Activated T-helper 1 cell treated with anti-CD3 and anti-CD28 coated beads, Interleukin-12 subunit alpha, Interleukin-12 subunit beta, Interleukin-2, Interleukin-4 antibody, amounts not matched to agents 30 ng/mL and 10 ng/mL and 1 ng/mL, durations not matched to agents 14 hours and 24 hours and 36 hours (primary cell): ENCODE measurements at regions of chr1 and their contacts with region 1.

Region 1: GRCh38 chr1:211939876-211940468 is 95.4 kb downstream of the INTS7 start:
- DNase-seq: peak; percentile 33
- H3K4me3 Mint-ChIP-seq: no peak overlapping the region
- H3K27ac Mint-ChIP-seq: peak overlapping the region; percentile 2
- H3K4me1 Mint-ChIP-seq: peaks cover 47% of the 10 kb centered on the region
- H3K27me3 Mint-ChIP-seq: no peaks in the 10 kb centered on the region

Region 2: DNA sequence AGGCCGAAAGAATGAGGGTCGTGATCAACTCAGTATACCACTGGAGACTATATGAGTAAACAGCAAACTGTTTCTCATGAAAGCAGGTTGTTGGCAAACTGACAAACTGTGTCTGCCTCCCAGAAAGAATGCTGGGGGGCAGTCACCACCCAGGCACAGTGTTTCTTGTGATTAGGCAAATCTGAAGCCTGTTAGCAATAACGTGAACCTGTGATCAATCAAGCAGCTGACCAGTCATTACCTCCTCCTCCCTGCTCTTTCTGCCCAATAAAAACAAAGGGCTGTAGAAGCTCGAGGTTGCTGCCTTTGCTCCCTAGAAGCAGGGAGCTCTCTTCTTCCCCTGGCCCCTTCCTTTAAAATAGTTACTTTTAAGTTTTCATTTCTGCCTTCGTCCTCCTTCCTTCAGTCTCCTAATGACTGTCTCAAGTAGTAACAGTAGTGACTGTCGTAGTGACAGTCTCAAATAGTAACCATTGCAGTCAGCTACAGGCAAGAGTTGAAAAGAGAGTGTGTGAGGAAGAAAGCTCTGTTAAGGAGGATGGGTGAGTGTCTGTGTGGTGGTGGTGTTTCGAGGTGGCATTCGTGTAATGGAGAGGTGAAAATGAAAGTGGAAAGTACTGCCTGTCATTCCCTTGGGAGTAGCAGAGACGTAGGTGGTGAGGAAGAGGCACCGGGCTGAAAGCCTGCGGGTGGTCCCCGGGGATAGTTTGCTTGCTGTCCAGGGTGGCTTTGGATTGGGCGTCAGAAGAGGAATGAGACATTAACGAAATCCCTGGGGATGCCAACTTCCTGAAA is 1596.8 kb before region 1 on chr1:
- intact Hi-C with region 1: loop called (anchors 5 kb)
- DNase-seq: no peak
- H3K4me3 Mint-ChIP-seq: no peak overlapping the region
- H3K27ac Mint-ChIP-seq: no peak overlapping the region
- H3K4me1 Mint-ChIP-seq: peaks cover 29% of the 10 kb centered on the region
- H3K27me3 Mint-ChIP-seq: peaks cover 9% of the 10 kb centered on the region

Region 3: DNA sequence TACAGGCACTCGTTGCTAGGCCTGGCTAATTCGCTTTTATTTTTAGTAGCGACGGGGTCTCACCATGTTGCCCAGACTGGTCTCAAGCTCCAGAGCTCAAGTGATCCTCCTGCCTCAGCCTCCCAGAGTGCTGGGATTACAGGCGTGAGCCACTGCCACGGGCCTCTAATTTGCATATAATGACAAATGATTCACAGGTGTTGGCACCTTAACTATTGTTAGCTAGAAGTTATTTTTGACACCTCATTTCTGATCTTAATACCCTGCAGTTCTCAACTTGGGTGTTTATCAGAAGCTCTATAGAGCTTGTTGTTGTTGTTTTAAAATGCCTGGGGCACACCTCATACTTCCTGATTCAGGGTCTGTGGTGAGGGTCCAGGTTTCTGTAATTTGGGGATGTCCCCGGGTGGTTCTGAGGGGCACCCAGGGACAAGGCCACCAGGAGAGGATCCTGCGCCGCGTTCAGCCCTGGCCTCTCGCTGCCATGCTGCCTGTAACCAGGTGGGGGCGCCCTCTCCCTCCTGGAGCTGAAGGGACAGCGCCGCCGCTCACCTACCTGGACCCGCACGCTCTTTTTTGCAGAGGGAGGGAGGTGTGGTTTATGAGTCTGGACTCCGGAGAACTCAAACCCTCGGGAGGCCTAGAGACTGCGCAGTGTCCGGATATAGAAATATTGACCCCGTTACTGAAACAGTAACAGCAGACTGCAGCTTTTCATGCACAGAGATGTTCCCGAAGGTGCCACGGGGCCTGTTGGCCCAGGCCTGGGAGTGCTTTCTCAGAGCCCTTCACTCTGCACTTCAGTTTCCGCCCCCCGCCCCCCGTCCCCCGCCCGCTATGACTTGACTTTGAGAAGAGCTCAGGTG is 241.6 kb before region 1 on chr1:
- intact Hi-C with region 1: loop called (anchors 1 kb)
- DNase-seq: peak; percentile 75
- H3K4me3 Mint-ChIP-seq: peak overlapping the region; percentile 41
- H3K27ac Mint-ChIP-seq: no peak overlapping the region
- H3K4me1 Mint-ChIP-seq: peaks cover 36% of the 10 kb centered on the region
- H3K27me3 Mint-ChIP-seq: peaks cover 15% of the 10 kb centered on the region

Region 4: DNA sequence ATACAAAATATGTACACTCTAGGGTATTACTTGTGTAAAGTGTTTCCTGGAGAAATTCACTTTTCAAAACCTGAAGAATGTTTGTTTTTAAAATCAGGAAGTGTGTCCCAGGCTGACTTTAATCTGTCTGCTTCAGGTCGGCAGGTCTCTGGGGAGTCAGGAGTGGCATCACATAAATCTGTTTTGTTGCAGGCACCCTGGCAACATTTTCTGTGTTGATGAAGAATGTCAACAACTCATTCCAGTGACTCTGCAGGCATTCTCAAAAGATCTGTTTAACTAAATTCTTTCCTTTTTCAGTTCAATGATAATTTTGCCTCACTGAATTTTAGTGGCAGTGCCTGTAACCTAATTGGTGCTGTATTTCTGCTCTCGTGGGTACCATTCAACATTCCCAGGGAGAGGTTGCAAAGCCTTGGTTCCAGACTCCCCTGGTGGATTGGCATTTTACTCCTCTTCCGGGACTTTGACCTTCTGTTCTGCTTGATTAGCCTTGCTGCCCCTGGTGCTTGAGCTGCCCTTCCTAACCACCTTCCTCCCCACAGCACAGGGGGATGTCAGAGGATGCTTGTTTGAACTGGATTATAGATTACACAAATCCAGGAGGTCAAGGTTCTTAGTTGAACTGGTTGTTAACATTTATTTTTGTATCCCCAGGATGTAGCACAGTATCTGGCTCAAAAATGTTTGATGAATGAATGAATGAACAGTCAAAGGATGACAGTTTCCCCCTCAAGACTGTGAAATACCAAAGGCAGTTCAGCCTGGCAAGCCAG is 54.0 kb before region 1 on chr1:
- intact Hi-C with region 1: loop called (anchors 5 kb)
- DNase-seq: no peak
- H3K4me3 Mint-ChIP-seq: no peak overlapping the region
- H3K27ac Mint-ChIP-seq: no peak overlapping the region
- H3K4me1 Mint-ChIP-seq: peaks cover 7% of the 10 kb centered on the region
- H3K27me3 Mint-ChIP-seq: peaks cover 10% of the 10 kb centered on the region

Region 5: GRCh38 chr1:212432706-212433576 is 493.0 kb after region 1 on chr1 and contains the start of gene NENF:
- intact Hi-C with region 1: loop called (anchors 5 kb)
- DNase-seq: peak; percentile 74
- H3K4me3 Mint-ChIP-seq: peak within 1 kb of the TSS; percentile 77
- H3K27ac Mint-ChIP-seq: peak within 1 kb of the TSS; percentile 53
- H3K4me1 Mint-ChIP-seq: peaks cover 32% of the 10 kb centered on the region
- H3K27me3 Mint-ChIP-seq: peaks cover 6% of the 10 kb centered on the region
- total RNA-seq, gene NENF: 29.7 and 32.5 TPM in 2 replicates